ENCODE measurements at regions of chr15 and their contacts with region 1.

Region 1: DNA sequence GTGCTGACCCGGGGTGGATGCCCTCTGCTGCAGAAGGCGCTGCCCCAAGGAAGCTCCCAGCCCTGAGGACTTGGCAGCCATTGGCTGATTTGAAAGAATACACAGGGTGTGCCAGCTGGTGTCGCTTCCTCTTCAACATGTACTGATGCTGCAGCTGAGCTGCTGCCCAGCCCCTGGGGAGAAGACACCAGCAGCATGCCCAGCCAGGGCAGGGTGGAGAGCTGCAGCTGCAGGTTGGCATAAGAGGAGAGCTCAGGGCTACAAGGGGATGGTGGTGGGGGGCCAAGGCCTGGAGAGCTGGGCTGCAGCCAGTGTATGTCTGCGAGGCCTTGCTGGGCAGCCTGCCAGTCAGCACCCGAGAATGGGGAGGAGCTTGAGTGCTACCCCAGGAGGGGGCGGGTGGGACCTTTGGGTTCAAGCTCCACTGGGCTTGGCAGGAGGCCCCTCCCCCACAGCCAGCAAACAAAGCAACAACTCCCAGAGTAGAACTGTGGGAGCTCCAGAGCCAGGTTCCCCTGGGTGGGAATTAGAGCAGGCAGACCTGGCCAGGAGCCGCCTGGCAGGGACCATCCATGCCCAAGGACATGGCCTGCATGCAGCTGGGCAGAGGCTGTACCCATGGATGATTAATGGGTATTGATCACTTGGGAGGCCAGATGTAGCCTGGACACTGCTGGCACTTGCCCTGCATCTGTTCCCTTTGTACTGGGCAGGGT is 9.2 kb upstream of the SEMA4B start:
- DNase-seq: peak; percentile 69
- ATAC-seq: peak; percentile 75
- H3K4me3 Mint-ChIP-seq: peak overlapping the region; percentile 77
- H3K27ac Mint-ChIP-seq: peak overlapping the region; percentile 98
- H3K4me1 Mint-ChIP-seq: peaks cover 97% of the 10 kb centered on the region
- H3K27me3 Mint-ChIP-seq: no peaks in the 10 kb centered on the region
- CTCF ChIP-seq: no peak

Region 2: GRCh38 chr15:90141646-90142045 is 50.3 kb before region 1 on chr15:
- CTCF ChIA-PET with region 1: no interaction called
- POLR2A ChIA-PET with region 1: no interaction called
- intact Hi-C with region 1: no loop called
- DNase-seq: no peak
- ATAC-seq: no peak
- H3K4me3 Mint-ChIP-seq: no peak overlapping the region
- H3K27ac Mint-ChIP-seq: no peak overlapping the region
- H3K4me1 Mint-ChIP-seq: peaks cover 3% of the 10 kb centered on the region
- H3K27me3 Mint-ChIP-seq: peaks cover 7% of the 10 kb centered on the region
- CTCF ChIP-seq: no peak

Region 3: GRCh38 chr15:90209591-90209990 is 17.6 kb after region 1 on chr15:
- CTCF ChIA-PET with region 1: interaction called, 130 read pairs
- POLR2A ChIA-PET with region 1: interaction called, 248 read pairs
- intact Hi-C with region 1: loop called (anchors 1 kb)
- DNase-seq: no peak
- ATAC-seq: peak; percentile 28
- H3K4me3 Mint-ChIP-seq: peak overlapping the region; percentile 65
- H3K27ac Mint-ChIP-seq: peak overlapping the region; percentile 95
- H3K4me1 Mint-ChIP-seq: peaks cover 98% of the 10 kb centered on the region
- H3K27me3 Mint-ChIP-seq: no peaks in the 10 kb centered on the region
- CTCF ChIP-seq: no peak

Region 4: GRCh38 chr15:90214553-90215196 is 22.7 kb after region 1 on chr15:
- CTCF ChIA-PET with region 1: interaction called, 130 read pairs
- POLR2A ChIA-PET with region 1: interaction called, 117 read pairs
- intact Hi-C with region 1: loop called (anchors 1 kb)
- DNase-seq: no peak
- ATAC-seq: peak; percentile 29
- H3K4me3 Mint-ChIP-seq: peak overlapping the region; percentile 59
- H3K27ac Mint-ChIP-seq: peak overlapping the region; percentile 95
- H3K4me1 Mint-ChIP-seq: peaks cover 97% of the 10 kb centered on the region
- H3K27me3 Mint-ChIP-seq: no peaks in the 10 kb centered on the region
- CTCF ChIP-seq: no peak

Region 5: DNA sequence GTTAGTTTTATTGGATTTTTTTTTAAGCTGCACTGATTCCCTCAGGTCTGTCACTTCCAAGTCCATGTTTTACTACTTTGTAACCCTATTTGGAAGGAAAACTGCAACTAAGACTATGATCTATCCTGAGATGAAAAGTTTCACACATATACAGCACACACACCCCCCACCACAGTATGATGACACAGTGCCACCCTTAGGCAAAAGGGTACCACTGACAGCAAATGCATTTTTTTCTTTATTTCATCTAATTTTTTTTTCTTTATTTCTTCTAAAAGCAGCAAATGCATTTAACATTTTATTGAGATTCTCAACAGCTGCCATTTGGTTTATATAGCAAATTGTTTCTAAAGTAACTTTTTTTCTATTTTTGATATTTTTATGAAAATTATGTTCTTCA is 94.7 kb after region 1 on chr15:
- CTCF ChIA-PET with region 1: no interaction called
- POLR2A ChIA-PET with region 1: interaction called, 11 read pairs
- intact Hi-C with region 1: no loop called
- DNase-seq: no peak
- ATAC-seq: peak; percentile 68
- H3K4me3 Mint-ChIP-seq: no peak overlapping the region
- H3K27ac Mint-ChIP-seq: no peak overlapping the region
- H3K4me1 Mint-ChIP-seq: peaks cover 3% of the 10 kb centered on the region
- H3K27me3 Mint-ChIP-seq: no peaks in the 10 kb centered on the region
- CTCF ChIP-seq: no peak

Region 6: GRCh38 chr15:90436952-90437351 is 245.0 kb after region 1 on chr15:
- CTCF ChIA-PET with region 1: no interaction called
- POLR2A ChIA-PET with region 1: no interaction called
- intact Hi-C with region 1: no loop called
- DNase-seq: no peak
- ATAC-seq: no peak
- H3K4me3 Mint-ChIP-seq: no peak overlapping the region
- H3K27ac Mint-ChIP-seq: no peak overlapping the region
- H3K4me1 Mint-ChIP-seq: peaks cover 5% of the 10 kb centered on the region
- H3K27me3 Mint-ChIP-seq: no peaks in the 10 kb centered on the region
- CTCF ChIP-seq: no peak